Activated CD4-positive, alpha-beta memory T cell treated with anti-CD3 and anti-CD28 coated beads for 36 hours (primary cell): ENCODE measurements at regions of chr1 and their contacts with region 1.

Region 1: GRCh38 chr1:168342572-168343280 is 62.0 kb downstream of the TBX19 start:
- DNase-seq: peak; percentile 92
- H3K4me3 Mint-ChIP-seq: no peak overlapping the region
- H3K27ac Mint-ChIP-seq: peak overlapping the region; percentile 42
- H3K4me1 Mint-ChIP-seq: peaks cover 35% of the 10 kb centered on the region
- H3K27me3 Mint-ChIP-seq: no peaks in the 10 kb centered on the region

Region 2: DNA sequence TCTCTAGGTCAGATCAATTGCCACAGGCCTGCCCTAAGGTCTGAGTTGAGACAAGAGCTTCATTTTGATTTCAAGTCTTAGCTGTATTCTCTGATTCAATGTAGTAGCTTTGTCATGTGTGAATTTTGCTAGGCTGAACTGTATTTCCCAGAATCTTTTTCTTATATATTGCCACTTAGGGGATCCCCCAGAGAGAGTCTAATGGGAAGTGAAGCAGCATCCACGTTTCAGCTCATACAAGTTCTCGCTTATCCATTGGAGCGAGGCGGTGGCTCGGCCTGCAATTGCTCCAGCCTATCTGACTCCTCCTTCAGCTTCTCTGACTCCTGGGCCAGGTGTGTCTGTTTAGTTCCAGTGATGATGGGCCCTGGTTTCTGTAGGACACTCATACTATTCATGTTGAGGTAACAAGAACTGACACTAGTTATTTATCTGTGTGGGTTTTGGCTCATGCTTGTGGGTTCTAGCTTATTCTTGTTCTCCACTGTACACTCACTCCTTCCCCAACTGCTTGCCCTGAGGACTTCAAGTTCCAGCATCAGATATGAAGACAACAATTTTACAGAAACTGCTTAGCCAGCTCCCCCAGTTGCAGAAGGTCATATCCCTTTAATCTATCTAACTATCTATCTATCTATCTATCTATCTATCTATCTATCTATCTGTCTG is 13.9 kb before region 1 on chr1:
- CTCF ChIA-PET with region 1: interaction called, 10 read pairs
- POLR2A ChIA-PET with region 1: no interaction called
- intact Hi-C with region 1: no loop called
- DNase-seq: no peak
- H3K4me3 Mint-ChIP-seq: no peak overlapping the region
- H3K27ac Mint-ChIP-seq: no peak overlapping the region
- H3K4me1 Mint-ChIP-seq: no peaks in the 10 kb centered on the region
- H3K27me3 Mint-ChIP-seq: no peaks in the 10 kb centered on the region

Region 3: DNA sequence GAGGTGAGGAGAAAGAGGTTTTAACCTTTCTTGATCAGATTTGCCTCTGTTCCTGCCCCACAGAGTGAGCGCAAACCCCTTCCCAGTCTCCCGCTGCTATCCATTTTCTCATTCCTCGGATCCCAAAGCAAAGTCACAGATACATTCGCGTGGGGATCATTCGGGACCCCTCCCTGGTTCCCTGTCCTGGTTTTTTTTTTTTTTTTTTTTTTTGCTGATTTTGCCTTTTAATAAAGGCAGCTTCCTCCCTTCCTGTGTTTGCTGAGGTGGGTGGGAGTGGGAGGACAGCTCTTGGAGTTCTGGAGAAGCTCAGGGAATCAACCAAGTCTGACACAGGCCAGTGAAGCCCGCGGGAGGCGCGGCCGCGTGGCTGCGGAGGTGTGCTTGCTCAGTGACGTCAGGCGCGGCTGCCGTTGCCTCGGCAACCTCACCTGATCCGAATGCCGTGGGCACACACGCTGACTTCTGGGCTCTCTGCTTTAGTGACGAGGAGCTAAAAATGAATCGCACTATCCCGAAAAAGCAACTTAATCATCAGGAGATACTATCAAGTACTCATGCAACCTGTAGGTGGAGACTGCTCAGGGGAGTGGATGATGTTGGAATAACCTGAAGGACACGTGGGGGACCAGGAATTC is 44.3 kb after region 1 on chr1:
- CTCF ChIA-PET with region 1: interaction called, 29 read pairs
- POLR2A ChIA-PET with region 1: no interaction called
- intact Hi-C with region 1: no loop called
- DNase-seq: peak; percentile 87
- H3K4me3 Mint-ChIP-seq: peak overlapping the region; percentile 33
- H3K27ac Mint-ChIP-seq: peak overlapping the region; percentile 11
- H3K4me1 Mint-ChIP-seq: peaks cover 17% of the 10 kb centered on the region
- H3K27me3 Mint-ChIP-seq: peaks cover 2% of the 10 kb centered on the region

Region 4: GRCh38 chr1:168433238-168433637 is 90.5 kb after region 1 on chr1:
- CTCF ChIA-PET with region 1: interaction called, 124 read pairs
- POLR2A ChIA-PET with region 1: no interaction called
- intact Hi-C with region 1: no loop called
- DNase-seq: no peak
- H3K4me3 Mint-ChIP-seq: no peak overlapping the region
- H3K27ac Mint-ChIP-seq: no peak overlapping the region
- H3K4me1 Mint-ChIP-seq: no peaks in the 10 kb centered on the region
- H3K27me3 Mint-ChIP-seq: no peaks in the 10 kb centered on the region

Region 5: DNA sequence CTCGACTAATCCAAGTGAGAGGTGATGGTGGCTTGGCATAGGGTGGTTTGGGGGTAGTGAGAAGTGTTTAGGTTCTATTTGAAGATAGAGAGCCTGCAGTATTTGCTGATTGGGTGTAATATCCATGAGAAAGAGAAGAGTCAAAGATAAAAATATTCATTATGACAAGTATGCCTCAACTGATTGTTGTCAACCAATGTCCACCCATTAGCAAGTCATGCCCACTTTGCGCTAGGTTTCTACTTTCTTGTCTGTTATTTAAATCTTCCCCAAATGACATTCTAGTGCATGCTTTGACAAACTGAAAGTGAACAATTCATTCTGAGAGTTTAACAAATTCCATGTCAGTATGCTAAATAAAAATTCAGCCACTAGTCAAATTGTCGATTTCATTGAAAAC is 229.9 kb after region 1 on chr1:
- CTCF ChIA-PET with region 1: interaction called, 8 read pairs
- POLR2A ChIA-PET with region 1: no interaction called
- intact Hi-C with region 1: loop called (anchors 5 kb)
- DNase-seq: no peak
- H3K4me3 Mint-ChIP-seq: no peak overlapping the region
- H3K27ac Mint-ChIP-seq: no peak overlapping the region
- H3K4me1 Mint-ChIP-seq: peaks cover 18% of the 10 kb centered on the region
- H3K27me3 Mint-ChIP-seq: peaks cover 2% of the 10 kb centered on the region

Region 6: DNA sequence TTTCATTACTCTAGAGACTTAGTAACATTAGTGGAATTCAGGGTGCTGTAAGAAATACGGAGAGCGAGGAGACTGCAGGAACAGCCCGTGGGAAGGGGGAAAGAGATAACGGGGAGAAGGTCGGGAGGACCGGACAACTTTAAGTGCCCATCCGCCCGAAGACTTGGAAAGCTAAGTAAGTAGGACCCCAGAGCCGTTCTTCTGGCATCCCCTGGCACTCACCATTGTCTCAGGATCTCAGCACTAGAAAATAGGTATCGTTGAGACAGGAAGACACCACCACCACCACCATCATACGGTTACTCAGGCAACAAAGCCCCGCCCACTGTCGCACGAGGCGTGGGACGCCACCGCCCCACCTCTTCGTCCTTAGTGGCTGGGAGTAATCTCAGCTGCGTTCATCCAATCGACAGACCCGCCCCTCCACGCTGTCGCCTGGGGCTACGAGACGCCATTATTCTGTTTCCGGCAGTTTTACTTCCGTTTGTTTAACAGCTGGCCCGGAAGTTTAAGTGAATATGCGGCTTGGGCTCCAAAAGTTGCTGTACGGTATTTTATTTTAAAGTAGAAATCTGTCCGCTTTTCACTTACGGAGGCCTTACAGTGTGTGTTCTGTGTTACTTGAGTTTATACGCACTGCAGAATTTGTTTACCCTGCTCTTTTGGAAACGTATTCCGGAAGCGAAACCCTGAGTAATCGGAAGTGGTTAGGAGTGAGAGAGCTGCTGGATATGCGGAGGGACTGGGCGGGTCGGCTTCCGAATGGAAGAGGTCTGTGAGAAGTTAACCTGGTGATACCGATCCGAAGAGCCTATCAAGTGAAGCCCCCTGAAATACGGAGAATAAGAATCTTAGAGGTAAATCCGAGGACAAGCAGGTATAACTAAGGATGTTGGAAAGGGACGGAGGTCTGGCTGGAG is 1025.0 kb after region 1 on chr1 and contains the starts of genes BLZF1 and NME7:
- CTCF ChIA-PET with region 1: interaction called, 3 read pairs
- POLR2A ChIA-PET with region 1: interaction called, 3 read pairs
- intact Hi-C with region 1: loop called (anchors 5 kb)
- DNase-seq: peak; percentile 99
- H3K4me3 Mint-ChIP-seq: peak within 1 kb of the TSS; percentile 43
- H3K27ac Mint-ChIP-seq: no peak within 1 kb of the TSS
- H3K4me1 Mint-ChIP-seq: peaks cover 30% of the 10 kb centered on the region
- H3K27me3 Mint-ChIP-seq: no peaks in the 10 kb centered on the region
- total RNA-seq, gene BLZF1: 10.1 to 10.2 TPM
- total RNA-seq, gene NME7: 12.9 to 15.9 TPM